ENCODE measurements at regions of chr1 and their contacts with region 1.

Region 1: GRCh38 chr1:40363721-40364120 is 9.8 kb upstream of the SMAP2 start:
- DNase-seq: peak; percentile 48
- CTCF ChIP-seq: peak; percentile 25

Region 2: DNA sequence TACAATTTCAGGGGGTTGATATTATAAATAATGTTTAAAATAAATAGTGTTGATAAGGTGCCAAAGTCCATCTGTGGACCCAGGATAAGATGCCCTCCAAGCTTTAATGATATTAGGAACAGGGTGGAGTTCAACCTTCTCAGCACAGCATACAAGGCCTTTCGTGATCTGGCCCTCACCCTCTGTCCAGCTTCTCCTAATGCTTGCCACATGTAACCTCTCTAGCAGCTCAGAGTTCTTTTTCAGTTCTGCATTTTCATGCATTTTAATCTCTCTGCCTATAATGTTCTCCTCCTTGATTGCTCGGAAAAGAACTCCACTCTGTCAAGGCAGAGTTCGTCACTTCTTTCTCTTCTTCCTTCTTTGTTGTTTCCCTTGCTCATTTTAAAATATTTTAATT is 11.6 kb before region 1 on chr1:
- CTCF ChIA-PET with region 1: interaction called, 26 read pairs
- POLR2A ChIA-PET with region 1: no interaction called
- DNase-seq: peak; percentile 52
- CTCF ChIP-seq: no peak

Region 3: DNA sequence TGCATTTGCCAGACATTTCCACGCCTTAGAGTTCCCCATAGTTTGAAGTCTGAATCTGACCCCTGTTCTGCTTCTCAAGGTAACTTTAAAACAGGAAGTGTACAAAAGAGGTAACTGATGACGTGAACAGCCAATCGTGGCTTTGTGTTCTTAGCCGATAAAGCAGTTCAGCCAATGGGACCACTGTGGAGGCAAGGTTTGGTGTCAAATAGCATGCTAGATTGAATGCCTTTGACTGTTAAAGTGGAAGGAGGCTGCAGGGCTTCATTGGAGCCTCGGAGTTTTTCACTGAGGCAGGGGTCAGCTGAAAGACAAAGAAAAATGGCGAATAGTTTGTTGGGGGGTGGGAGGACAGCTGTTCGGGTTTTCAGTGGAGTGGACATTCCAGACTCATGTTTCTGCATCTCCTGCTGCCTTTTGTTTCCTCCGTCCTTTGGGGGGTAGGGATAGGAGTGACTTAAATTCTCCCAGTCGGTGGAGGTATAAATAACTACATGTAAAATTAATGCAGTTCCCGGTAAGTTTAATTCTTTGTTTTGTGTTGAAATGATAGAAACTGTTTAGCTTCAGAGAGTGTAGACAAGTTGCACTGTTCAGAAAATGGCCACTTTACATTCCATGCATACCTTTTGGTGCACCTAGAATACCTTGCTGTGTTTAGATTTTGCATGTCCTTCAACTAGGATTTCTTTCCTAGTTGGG is 345.5 kb after region 1 on chr1:
- CTCF ChIA-PET with region 1: no interaction called
- POLR2A ChIA-PET with region 1: no interaction called
- DNase-seq: peak; percentile 79
- CTCF ChIP-seq: no peak

Measured in GM10248 (cell line).